GM12878 (cell line): ENCODE measurements at regions of chr9 and their contacts with region 1.

Region 1: DNA sequence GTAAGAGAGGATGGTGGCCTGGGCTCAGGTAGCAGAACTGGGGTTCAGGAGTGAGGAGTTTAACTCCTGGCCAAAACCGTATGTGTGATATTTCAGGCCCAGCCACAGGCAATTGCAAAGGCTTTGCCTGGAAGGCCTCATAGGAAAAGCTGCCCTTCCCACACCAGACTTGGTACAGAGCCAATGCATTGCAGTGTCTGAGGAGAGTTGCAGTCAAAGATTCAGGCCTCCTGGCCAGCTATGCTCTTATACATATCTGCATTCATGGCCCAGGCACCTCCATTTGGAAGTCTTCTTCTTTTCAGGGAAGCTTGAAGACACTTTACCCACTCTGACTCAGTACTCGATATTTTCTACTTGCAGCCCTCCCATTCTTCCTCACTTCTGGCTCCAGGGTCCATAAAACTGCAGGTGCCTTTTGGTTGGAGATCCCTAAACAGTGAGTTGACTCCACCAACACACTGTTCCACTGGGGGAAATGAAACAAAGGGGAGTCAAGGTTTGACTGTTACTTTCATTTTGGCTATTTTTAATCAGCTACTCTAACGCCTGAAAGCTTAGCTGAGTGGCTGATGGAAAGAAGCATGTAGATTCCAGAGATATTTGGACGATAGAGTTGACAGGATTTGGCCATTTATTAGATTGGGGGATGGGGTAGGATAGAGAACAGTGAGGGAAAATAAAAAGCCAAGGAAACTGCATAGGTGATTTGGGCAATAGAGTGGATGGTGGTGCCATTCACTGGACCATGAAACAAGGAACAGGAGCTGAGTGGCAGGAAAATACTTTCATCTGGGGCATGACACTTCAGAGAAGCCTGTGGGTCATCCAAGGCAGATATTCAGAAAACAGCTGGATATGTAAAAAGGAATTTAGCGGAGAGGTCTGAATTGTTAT is 30.6 kb upstream of the IL33 start:
- DNase-seq: peak; percentile 61
- ATAC-seq: peak; percentile 97
- H3K4me3 ChIP-seq: peak overlapping the region; percentile 46; the same call in 1 of the 2 replicates
- H3K27ac ChIP-seq: peak overlapping the region; percentile 48
- H3K4me1 ChIP-seq: peaks cover 33% of the 10 kb centered on the region
- H3K27me3 ChIP-seq: no peaks in the 10 kb centered on the region
- CTCF ChIP-seq: no peak
- EP300 ChIP-seq: peak in 1 of 2 experiments; percentile 82; a peak in 1 of 4 replicates
- POLR2A ChIP-seq: no peak
- RAD21 ChIP-seq: peak; percentile 8; the same call in 1 of the 2 replicates

Region 2: DNA sequence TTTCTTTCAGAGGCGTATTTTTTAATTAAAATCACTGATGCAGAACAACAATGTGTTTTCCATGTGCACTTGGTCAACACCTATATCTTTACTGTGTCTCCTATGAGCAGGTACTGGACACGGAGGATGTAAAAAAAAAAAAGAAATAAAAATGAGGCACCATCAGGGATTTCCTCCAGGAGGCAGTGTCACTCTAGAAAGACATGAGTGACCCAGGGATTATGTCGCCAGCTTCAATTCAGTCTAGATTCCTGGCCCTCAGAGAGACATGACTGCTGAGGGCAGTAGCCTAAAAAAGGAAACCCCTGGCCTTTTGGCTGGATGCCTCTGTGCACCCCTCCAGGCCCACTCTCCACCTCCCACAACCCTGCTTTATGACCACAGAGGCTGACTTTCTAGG is 12.3 kb after region 1 on chr9:
- CTCF ChIA-PET with region 1: interaction called, 18 read pairs
- POLR2A ChIA-PET with region 1: interaction called, 4 read pairs
- RAD21 ChIA-PET with region 1: interaction called, 4 read pairs
- SMC1A ChIA-PET with region 1: interaction called, 19 read pairs
- in situ Hi-C with region 1: no loop called
- intact Hi-C with region 1: no loop called
- DNase-seq: no peak
- ATAC-seq: peak; percentile 47
- H3K4me3 ChIP-seq: no peak overlapping the region
- H3K27ac ChIP-seq: no peak overlapping the region
- H3K4me1 ChIP-seq: peaks cover 4% of the 10 kb centered on the region; the same call in 1 of the 2 replicates
- H3K27me3 ChIP-seq: no peaks in the 10 kb centered on the region; a peak in 1 of 4 replicates
- CTCF ChIP-seq: peak; percentile 18 to 28 (median 23); a peak in 3 of 6 replicates
- EP300 ChIP-seq: no peak
- POLR2A ChIP-seq: no peak
- RAD21 ChIP-seq: peak; percentile 57